ENCODE measurements at regions of chr13 and their contacts with region 1.

Region 1: DNA sequence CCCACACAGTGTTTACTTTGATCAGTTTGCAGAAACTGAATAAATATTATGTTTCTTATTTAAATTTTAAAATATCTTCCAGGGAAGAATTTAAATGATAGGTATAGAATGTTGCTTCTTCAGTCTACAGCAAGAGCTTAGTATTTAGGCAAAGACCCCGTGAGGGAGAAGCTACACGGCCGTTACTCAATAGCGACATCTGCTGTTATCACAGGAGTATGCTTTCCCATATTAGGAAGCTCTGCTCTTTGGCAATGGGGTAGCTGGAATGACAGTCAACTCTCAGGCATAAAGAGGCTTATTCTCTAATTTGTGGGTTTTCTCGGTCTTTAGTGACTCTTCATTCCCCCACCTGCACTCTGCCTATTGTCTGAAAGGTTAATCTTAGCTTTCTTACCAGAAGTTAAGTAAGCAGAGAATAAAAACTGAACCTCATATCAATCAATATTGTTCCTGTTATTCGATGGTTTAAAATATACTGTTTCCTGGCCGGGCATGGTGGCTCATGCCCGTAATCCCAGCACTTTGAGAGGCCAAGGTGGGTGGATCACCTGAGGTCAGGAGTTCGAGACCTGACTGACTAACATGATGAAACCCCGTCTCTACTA is 13.2 kb upstream of the LHFPL6 start:
- DNase-seq: no peak
- H3K4me3 ChIP-seq: no peak overlapping the region
- CTCF ChIP-seq: peak; percentile 88

Region 2: GRCh38 chr13:39051157-39051556 is 565.0 kb before region 1 on chr13:
- CTCF ChIA-PET with region 1: interaction called, 20 read pairs
- POLR2A ChIA-PET with region 1: no interaction called
- DNase-seq: peak; percentile 12
- H3K4me3 ChIP-seq: no peak overlapping the region
- CTCF ChIP-seq: peak; percentile 22

Region 3: GRCh38 chr13:39154041-39154440 is 462.1 kb before region 1 on chr13:
- CTCF ChIA-PET with region 1: interaction called, 306 read pairs
- POLR2A ChIA-PET with region 1: no interaction called
- DNase-seq: no peak
- H3K4me3 ChIP-seq: no peak overlapping the region
- CTCF ChIP-seq: no peak

Region 4: DNA sequence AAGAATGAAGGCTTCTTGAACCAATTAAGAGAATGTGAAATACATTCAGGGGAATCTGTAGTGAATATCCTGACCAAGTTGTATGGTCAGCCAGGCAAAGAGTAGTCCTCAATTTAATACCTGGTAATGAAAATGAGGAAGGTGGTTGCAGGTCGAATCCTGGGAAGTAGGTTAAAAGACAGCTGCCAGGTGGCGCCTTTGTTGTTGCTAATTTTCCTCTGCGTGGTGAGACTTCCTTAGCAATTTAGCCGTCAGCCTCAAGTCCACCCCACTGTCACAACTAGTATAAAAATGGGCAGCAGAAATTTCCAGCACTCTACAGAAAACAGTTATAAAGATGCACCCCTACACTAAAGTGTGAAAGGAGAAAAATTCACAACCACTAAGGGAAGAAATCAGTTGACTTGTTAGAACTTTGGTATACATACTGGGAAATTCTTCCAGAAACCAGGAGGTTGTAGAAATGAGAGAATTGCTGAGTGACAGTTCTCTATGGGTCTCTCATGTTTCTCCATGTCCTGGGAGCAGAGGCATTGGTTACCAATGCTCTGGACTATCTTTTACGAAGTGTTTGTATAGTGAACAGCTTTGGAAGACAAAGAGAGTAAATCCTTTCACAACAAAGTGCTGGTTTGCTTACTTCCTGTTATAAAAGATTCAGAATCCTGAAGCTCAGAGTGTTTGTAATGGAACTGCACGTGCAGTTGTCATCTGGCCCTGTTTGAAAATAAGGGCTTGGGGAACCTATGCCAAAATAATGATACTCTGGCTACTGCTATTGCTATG is 342.0 kb before region 1 on chr13:
- CTCF ChIA-PET with region 1: interaction called, 37 read pairs
- POLR2A ChIA-PET with region 1: no interaction called
- DNase-seq: no peak
- H3K4me3 ChIP-seq: no peak overlapping the region
- CTCF ChIP-seq: no peak

Region 5: GRCh38 chr13:39415008-39415802 is 201.0 kb before region 1 on chr13:
- CTCF ChIA-PET with region 1: interaction called, 89 read pairs
- POLR2A ChIA-PET with region 1: no interaction called
- DNase-seq: no peak
- H3K4me3 ChIP-seq: no peak overlapping the region
- CTCF ChIP-seq: peak; percentile 60

Region 6: GRCh38 chr13:39602614-39603366 is 13.4 kb before region 1 on chr13 and contains the start of gene LHFPL6:
- CTCF ChIA-PET with region 1: interaction called, 35 read pairs
- POLR2A ChIA-PET with region 1: no interaction called
- DNase-seq: no peak
- H3K4me3 ChIP-seq: peak within 1 kb of the TSS; percentile 87
- CTCF ChIP-seq: peak; percentile 60

Region 7: DNA sequence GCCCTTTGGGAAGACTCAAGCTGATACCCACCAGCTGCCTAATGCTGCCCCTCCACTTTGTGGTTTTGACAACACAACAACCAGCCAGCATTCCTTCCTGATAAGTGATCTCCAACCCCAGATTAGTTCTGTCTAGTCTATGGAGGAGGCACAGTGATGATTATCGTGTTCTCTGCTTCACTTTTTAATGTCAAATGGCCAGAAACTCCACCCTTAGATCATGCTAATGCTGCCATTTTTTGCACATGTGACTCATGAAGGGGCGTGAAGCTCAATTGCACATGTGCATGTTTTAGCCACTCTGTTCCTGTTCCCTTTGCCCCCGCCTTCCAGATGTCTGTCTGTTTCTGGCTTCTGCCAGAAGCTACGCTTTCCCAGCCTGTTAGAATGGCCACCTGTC is 239.0 kb after region 1 on chr13:
- CTCF ChIA-PET with region 1: no interaction called
- POLR2A ChIA-PET with region 1: no interaction called
- DNase-seq: no peak
- H3K4me3 ChIP-seq: no peak overlapping the region
- CTCF ChIP-seq: no peak